Gastrocnemius medialis (tissue), 4 donors: ENCODE measurements at regions of chr20 and their contacts with region 1.

Region 1: GRCh38 chr20:14055127-14055742 is 59.9 kb downstream of the MACROD2 start:
- DNase-seq: no peak
- ATAC-seq: peak; percentile 39 to 58
- H3K4me3 ChIP-seq: no peak overlapping the region
- H3K27ac ChIP-seq: no peak overlapping the region
- H3K4me1 ChIP-seq: no peaks in the 10 kb centered on the region
- H3K27me3 ChIP-seq: no peaks in the 10 kb centered on the region
- CTCF ChIP-seq: peak; percentile 26 to 57 (median 48)
- POLR2A ChIP-seq: no peak

Region 2: DNA sequence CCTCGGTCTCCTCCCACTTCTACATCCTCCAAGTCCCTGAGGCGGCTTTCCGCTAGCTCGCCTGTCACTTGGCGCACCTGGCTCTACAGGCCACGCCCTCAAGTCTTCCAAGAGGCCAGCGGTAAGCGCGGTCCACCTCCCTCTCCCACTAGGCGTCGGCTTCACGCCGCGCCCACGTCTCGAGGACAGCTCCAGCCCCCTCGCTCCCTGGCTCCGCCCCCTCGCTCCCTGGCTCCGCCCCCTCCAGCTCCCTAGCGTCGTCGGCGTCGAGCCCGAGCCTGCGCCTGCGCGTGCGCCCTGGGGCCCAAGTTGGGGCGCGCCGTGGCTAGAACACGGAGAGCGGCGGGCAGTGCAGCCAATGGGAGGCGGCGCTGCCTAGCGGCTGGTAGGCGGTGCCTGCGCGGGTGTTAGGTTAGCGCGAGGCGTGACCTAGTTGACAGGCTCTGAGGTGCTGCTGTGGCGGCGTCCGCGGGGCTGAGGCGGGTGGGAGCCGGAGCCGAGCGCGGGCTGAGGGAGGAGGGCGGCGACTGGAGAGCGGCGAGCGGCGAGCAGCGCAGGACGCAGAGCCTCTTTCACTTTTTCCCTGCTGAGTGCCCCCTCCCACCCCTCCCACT is 60.0 kb before region 1 on chr20 and contains the start of gene MACROD2:
- in situ Hi-C with region 1: no loop called
- intact Hi-C with region 1: loop called (anchors 1 kb)
- DNase-seq: peak; percentile 74 to 90
- ATAC-seq: peak; percentile 92 to 96
- H3K4me3 ChIP-seq: peak within 1 kb of the TSS; percentile 68 to 80 (median 76)
- H3K27ac ChIP-seq: peak within 1 kb of the TSS; percentile 84 to 87 (median 86)
- H3K4me1 ChIP-seq: no peaks in the 10 kb centered on the region
- H3K27me3 ChIP-seq: no peaks in the 10 kb centered on the region
- CTCF ChIP-seq: no peak
- POLR2A ChIP-seq: peak; percentile 64 to 87
- total RNA-seq, gene MACROD2: 1.8 to 10.2 (median 3.6) TPM